RWPE1 (cell line): ENCODE measurements at regions of chr3 and their contacts with region 1.

Region 1: GRCh38 chr3:122101646-122102045 is 46.5 kb downstream of the CD86 start:
- DNase-seq: peak; percentile 26
- H3K27ac ChIP-seq: no peak overlapping the region
- CTCF ChIP-seq: no peak

Region 2: GRCh38 chr3:121989943-121990342 is 111.7 kb before region 1 on chr3:
- CTCF ChIA-PET with region 1: no interaction called
- POLR2A ChIA-PET with region 1: no interaction called
- DNase-seq: no peak
- H3K27ac ChIP-seq: no peak overlapping the region
- CTCF ChIP-seq: no peak

Region 3: GRCh38 chr3:122004991-122005565 is 96.6 kb before region 1 on chr3:
- CTCF ChIA-PET with region 1: no interaction called
- POLR2A ChIA-PET with region 1: no interaction called
- DNase-seq: no peak
- H3K27ac ChIP-seq: no peak overlapping the region
- CTCF ChIP-seq: no peak

Region 4: DNA sequence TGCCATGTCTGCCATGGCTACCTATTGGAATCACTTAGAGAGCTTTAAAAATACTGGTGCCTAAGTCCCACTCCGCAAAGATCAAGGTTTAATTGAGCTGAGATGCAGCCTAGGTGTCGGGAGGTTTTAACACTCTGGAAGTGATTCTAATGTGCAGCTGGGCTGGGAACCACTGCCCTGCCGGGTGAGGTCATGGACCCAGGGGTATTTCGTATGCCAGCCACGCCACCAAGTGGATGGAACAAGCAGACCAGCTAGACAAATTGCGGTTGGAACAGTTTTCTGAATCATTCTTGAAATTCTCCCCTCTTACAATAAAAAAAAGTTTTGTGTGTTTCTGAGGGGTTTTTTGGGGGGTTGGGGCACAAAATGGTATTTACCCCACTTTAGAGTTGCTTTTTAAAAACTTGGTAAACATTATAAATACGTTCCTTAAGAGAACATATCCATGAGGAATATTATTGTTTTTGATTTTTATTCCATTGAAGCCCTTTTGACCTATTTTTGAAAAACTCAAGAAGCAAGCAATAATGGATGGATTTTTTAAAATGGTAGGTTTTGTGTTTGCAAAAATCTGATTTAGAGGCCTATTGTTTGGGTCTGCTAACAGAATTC is 157.2 kb after region 1 on chr3:
- CTCF ChIA-PET with region 1: interaction called, 11 read pairs
- POLR2A ChIA-PET with region 1: no interaction called
- DNase-seq: peak; percentile 84
- H3K27ac ChIP-seq: no peak overlapping the region
- CTCF ChIP-seq: peak; percentile 58

Region 5: GRCh38 chr3:123522320-123523022 is 1420.8 kb after region 1 on chr3:
- CTCF ChIA-PET with region 1: interaction called, 13 read pairs
- POLR2A ChIA-PET with region 1: no interaction called
- DNase-seq: no peak
- H3K27ac ChIP-seq: no peak overlapping the region
- CTCF ChIP-seq: no peak